HepG2 (cell line): ENCODE measurements at regions of chr5 and their contacts with region 1.

Region 1: DNA sequence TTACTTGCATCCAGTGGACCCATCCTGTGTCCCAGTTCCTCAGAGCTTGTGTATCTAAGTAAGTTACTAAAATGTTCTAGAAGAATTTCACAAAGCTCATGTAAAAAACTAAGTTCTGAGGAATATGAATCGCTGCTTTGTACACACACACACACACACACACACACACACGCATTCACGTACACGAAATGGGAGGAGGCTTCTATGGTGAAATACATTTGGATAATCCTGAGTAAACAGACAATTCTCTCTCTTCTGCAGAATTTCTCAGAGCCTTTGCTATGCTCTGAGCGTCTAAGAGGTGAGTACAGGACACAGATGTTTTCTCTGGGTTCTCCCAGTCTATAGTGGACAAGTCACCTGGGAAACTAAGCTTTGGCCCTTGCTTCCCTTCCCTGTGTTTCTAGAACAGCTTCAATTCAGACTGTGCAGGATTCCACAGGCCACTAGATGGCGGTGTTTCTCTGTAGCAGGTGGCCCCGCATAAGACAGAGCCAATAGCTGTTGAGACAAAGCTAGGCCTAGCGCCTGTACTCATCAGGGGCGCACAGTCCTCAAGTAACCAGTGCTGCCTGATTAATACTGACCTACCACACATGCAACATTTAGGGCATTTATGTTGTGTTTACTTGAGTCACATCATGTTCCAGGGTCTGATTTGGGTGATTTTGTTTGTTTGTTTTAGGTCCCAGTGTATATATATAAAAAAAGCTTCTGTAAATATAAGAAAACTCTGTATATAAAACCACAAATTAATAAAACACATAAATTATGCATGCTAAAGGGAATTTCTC is 114.8 kb downstream of the LIFR start:
- DNase-seq: peak; percentile 87
- ATAC-seq: peak; percentile 99
- H3K4me3 ChIP-seq: no peak overlapping the region
- H3K27ac ChIP-seq: no peak overlapping the region
- H3K4me1 ChIP-seq: no peaks in the 10 kb centered on the region
- H3K27me3 ChIP-seq: peaks cover 1 to 7% of the 10 kb centered on the region in 2 experiments; a peak in 2 of 5 replicates
- CTCF ChIP-seq: peak; percentile 99
- EP300 ChIP-seq: no peak
- POLR2A ChIP-seq: no peak
- RAD21 ChIP-seq: peak; percentile 95

Region 2: GRCh38 chr5:38382898-38383297 is 58.8 kb before region 1 on chr5:
- CTCF ChIA-PET with region 1: no interaction called
- POLR2A ChIA-PET with region 1: no interaction called
- in situ Hi-C with region 1: no loop called
- intact Hi-C with region 1: loop called (anchors 2 kb)
- DNase-seq: peak; percentile 85
- ATAC-seq: peak; percentile 99
- H3K4me3 ChIP-seq: no peak overlapping the region
- H3K27ac ChIP-seq: no peak overlapping the region
- H3K4me1 ChIP-seq: peaks cover 6% of the 10 kb centered on the region; the same call in 1 of the 2 replicates
- H3K27me3 ChIP-seq: peaks cover 0 to 14% of the 10 kb centered on the region in 2 experiments; a peak in 3 of 5 replicates
- CTCF ChIP-seq: peak; percentile 90
- EP300 ChIP-seq: peak in 1 of 2 experiments; percentile 35; a peak in 1 of 4 replicates
- POLR2A ChIP-seq: no peak
- RAD21 ChIP-seq: peak; percentile 79

Region 3: GRCh38 chr5:38426986-38427950 is 14.4 kb before region 1 on chr5:
- CTCF ChIA-PET with region 1: no interaction called
- POLR2A ChIA-PET with region 1: no interaction called
- in situ Hi-C with region 1: no loop called
- intact Hi-C with region 1: no loop called
- DNase-seq: no peak
- ATAC-seq: no peak
- H3K4me3 ChIP-seq: no peak overlapping the region
- H3K27ac ChIP-seq: no peak overlapping the region
- H3K4me1 ChIP-seq: no peaks in the 10 kb centered on the region
- H3K27me3 ChIP-seq: no peaks in the 10 kb centered on the region; a peak in 1 of 5 replicates
- CTCF ChIP-seq: no peak
- EP300 ChIP-seq: no peak
- POLR2A ChIP-seq: no peak
- RAD21 ChIP-seq: no peak

Region 4: GRCh38 chr5:38515646-38516045 is 74.0 kb after region 1 on chr5:
- CTCF ChIA-PET with region 1: interaction called, 3 read pairs
- POLR2A ChIA-PET with region 1: no interaction called
- in situ Hi-C with region 1: no loop called
- intact Hi-C with region 1: loop called (anchors 2 kb)
- DNase-seq: peak; percentile 17
- ATAC-seq: peak; percentile 88
- H3K4me3 ChIP-seq: no peak overlapping the region
- H3K27ac ChIP-seq: no peak overlapping the region
- H3K4me1 ChIP-seq: no peaks in the 10 kb centered on the region
- H3K27me3 ChIP-seq: no peaks in the 10 kb centered on the region
- CTCF ChIP-seq: peak; percentile 48
- EP300 ChIP-seq: no peak
- POLR2A ChIP-seq: no peak
- RAD21 ChIP-seq: no peak

Region 5: GRCh38 chr5:38556599-38557305 is 115.1 kb after region 1 on chr5 and contains the start of gene LIFR:
- CTCF ChIA-PET with region 1: interaction called, 13 read pairs
- POLR2A ChIA-PET with region 1: interaction called, 5 read pairs
- in situ Hi-C with region 1: loop called (anchors 10 kb)
- intact Hi-C with region 1: loop called (anchors 1 kb)
- DNase-seq: peak; percentile 39
- ATAC-seq: peak; percentile 88
- H3K4me3 ChIP-seq: peak within 1 kb of the TSS; percentile 91 to 96 (median 93)
- H3K27ac ChIP-seq: peak within 1 kb of the TSS; percentile 84
- H3K4me1 ChIP-seq: peaks cover 45% of the 10 kb centered on the region
- H3K27me3 ChIP-seq: no peaks in the 10 kb centered on the region; a peak in 1 of 5 replicates
- CTCF ChIP-seq: no peak; the same call in 1 of the 2 replicates
- EP300 ChIP-seq: no peak
- POLR2A ChIP-seq: peak in 1 of 2 experiments; percentile 85; a peak in 2 of 4 replicates
- RAD21 ChIP-seq: 0 out of 2 replicates have a peak, but pooled peaks have one; percentile 8
- total RNA-seq, gene LIFR: 20.1 and 25.2 TPM in 2 replicates

Region 6: DNA sequence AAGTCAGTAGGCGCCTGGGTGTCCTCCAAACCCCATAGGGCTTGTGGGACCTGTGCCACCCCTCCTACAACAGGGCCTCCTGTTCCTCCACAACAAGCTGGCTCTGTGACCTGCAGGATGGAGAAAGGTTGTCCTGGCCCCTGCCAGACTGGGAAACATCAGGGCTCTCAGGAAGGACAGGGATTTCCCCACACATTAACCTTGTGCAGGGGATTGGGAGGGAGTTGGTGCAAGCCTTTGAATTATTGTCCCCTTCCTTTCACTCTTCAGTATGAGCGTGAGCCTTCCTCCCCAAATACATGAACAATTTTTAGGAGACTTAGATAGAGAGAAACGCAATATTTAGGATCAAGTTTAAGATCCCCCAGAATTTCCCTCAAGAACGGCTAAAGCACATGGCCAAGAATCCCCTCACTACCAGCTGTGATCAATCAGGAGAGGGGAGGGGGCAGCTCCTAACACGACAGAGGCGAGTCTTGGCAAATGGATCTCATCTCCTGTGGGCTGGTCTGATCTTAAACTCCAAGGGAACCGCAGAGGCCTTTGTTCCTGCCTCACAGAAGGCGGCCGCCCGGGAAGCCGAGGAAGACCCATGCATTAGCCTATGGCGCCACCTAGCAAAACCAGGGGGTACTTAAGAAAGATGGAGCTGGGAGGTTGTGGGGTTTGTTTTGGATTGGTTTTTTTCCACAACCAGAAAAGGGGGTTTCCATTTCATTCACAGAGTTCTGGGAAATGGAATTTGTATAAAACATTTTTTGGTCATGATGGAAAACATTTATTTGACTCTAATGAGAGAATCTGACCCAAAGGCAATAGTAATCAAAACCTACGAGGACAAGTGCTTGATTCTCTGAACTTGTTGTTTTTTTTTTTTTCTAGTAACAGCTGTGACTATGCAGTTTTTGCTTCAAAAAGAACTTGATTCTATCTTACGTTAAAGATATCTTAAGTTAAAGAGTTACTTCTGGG is 368.0 kb after region 1 on chr5:
- CTCF ChIA-PET with region 1: interaction called, 33 read pairs
- POLR2A ChIA-PET with region 1: interaction called, 5 read pairs
- in situ Hi-C with region 1: loop called (anchors 5 kb)
- intact Hi-C with region 1: loop called (anchors 1 kb)
- DNase-seq: peak; percentile 68
- ATAC-seq: peak; percentile 98
- H3K4me3 ChIP-seq: no peak overlapping the region
- H3K27ac ChIP-seq: no peak overlapping the region
- H3K4me1 ChIP-seq: peaks cover 13% of the 10 kb centered on the region
- H3K27me3 ChIP-seq: no peaks in the 10 kb centered on the region
- CTCF ChIP-seq: peak; percentile 88
- EP300 ChIP-seq: no peak
- POLR2A ChIP-seq: no peak
- RAD21 ChIP-seq: peak; percentile 82